ENCODE measurements at regions of chr1 and their contacts with region 1.

Region 1: DNA sequence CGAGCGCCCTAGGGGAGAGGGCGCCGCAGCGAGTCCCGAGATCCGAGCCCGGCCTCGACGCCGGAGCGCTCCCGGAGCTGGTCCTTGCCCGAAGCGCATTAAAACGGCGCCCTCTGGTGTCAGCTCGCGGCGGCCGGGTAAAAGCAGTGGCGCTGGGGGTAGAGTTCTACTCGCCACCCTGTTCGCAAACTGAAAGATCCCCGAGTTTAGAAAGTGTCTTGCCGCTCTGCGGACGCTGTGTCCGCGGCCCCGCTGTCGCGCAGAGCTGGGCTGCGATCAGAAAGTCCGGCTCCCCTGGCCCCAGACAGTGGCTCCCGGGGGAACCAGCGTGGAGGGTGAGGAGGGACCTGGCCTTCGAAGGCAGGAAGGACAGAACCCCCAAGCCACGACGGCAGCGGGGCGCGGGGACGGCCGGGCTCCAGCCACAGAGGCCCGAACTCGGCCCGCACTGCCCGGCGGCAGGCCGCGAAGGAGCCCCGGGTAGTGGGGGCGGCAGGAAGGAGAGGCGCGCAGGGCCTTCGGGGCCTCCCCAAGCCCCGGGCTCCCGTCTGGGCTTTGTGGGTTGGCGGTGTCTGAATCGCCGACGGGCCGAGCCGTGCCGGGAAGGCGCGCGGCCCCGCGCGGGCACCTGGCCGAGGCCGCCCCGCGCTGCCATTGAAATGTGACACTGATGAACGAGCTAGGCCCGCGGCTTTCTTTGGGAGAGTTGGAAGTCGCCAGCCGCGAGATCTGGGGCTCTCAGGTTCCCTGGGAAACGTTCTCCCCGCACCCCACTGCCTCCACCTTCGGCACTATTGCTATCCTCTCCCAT is 39.1 kb upstream of the NFIA start:
- DNase-seq: peak; percentile 59 to 62
- ATAC-seq: peak; percentile 98 to 100
- H3K4me3 ChIP-seq: peak overlapping the region; percentile 34; the same call in 2 of the 3 replicates
- H3K27ac ChIP-seq: peak overlapping the region; percentile 66 to 79; a peak in 5 of 6 replicates
- H3K4me1 ChIP-seq: no peaks in the 10 kb centered on the region
- CTCF ChIP-seq: peak; percentile 64
- EP300 ChIP-seq: no peak
- POLR2A ChIP-seq: no peak
- RAD21 ChIP-seq: peak; percentile 67 to 81

Region 2: DNA sequence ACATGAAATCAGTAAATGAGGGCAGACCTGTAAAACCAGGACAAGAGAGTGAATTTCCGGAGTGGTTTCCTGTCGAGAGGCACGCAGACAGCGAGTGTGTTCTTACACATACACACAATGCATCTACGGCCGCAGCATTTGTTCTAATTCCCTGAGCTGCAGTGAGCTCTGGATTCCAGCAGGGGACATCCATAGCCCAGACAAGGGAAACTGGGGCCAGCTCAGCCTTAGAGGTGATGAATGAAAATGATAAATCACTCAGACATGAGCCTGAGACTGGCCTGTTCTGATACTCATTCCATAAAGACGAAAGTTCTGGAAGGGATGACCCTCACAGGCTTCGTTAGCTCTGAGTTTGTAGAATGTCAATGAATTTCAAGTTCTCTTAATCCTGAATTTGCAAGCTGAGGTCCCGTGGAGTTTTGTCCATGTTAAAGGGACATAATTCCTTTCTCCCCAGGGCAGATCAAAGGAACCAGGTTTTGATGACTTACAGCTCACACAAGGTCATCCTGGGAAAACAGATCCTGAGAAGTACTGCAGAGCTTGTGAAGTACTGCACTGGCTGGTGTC is 761.8 kb before region 1 on chr1:
- CTCF ChIA-PET with region 1: interaction called, 12 read pairs
- POLR2A ChIA-PET with region 1: no interaction called
- DNase-seq: peak; percentile 47 to 57
- ATAC-seq: peak; percentile 99 to 100
- H3K4me3 ChIP-seq: no peak overlapping the region
- H3K27ac ChIP-seq: no peak overlapping the region
- H3K4me1 ChIP-seq: no peaks in the 10 kb centered on the region
- CTCF ChIP-seq: peak; percentile 55
- EP300 ChIP-seq: no peak
- POLR2A ChIP-seq: no peak
- RAD21 ChIP-seq: peak; percentile 69 to 85

Region 3: DNA sequence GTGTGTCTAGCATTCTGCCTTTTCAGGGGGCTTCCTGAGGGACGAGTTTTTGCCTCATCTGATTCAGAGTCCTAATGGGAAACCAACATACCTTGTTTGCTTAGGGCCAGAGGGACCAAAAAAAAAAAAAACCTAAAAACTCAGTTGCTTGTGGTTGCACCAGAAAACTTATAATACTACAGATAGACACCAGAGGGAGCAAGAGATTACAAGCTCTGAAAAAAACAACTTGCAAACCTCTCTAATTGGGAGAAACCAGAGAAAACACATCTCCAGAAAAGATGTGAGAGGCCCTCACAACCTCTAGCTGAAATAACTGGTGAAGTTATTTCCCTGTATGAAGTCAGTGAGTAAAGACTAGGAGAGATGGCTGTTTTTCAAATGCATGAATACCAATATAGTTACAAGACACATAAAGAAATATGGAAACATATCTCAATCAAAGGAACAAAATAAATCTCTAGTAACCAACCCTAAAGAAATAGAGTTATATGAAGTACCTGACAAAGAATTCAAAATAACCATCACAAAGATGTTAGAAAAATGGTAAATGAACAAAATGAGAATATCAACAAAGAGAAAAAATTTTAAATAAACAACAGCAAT is 194.5 kb before region 1 on chr1:
- CTCF ChIA-PET with region 1: interaction called, 30 read pairs
- POLR2A ChIA-PET with region 1: interaction called, 3 read pairs
- DNase-seq: peak in 1 of 2 experiments; percentile 32
- ATAC-seq: peak in 1 of 2 experiments; percentile 44; a peak in 3 of 6 replicates
- H3K4me3 ChIP-seq: no peak overlapping the region
- H3K27ac ChIP-seq: no peak overlapping the region; a peak in 2 of 6 replicates
- H3K4me1 ChIP-seq: no peaks in the 10 kb centered on the region; the same call in 2 of the 3 replicates
- CTCF ChIP-seq: peak; percentile 60
- EP300 ChIP-seq: no peak
- POLR2A ChIP-seq: no peak
- RAD21 ChIP-seq: peak; percentile 59 to 67

Region 4: DNA sequence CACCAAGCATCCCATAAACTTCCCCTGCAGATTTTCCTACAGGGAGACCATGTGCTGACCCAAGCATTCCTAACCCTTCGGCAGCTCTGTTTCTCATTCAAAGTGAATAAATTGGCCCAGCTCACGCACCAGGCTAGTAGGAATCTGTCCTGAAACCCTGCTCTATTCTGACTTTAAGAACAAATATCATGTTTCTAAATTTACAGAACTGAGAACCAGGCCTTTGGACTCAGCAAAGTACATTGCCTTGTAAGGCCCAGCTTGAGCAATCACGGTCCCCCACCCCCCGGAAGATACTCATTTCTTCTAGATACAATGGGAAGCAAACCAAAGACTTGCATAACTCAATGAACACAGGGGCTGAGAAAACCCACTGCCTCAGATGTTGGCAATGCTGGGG is 120.9 kb before region 1 on chr1:
- CTCF ChIA-PET with region 1: no interaction called
- POLR2A ChIA-PET with region 1: no interaction called
- DNase-seq: no peak
- ATAC-seq: no peak
- H3K4me3 ChIP-seq: no peak overlapping the region
- H3K27ac ChIP-seq: no peak overlapping the region
- H3K4me1 ChIP-seq: no peaks in the 10 kb centered on the region
- CTCF ChIP-seq: no peak
- EP300 ChIP-seq: no peak
- POLR2A ChIP-seq: no peak
- RAD21 ChIP-seq: no peak

Region 5: GRCh38 chr1:60978421-60979357 is 64.5 kb before region 1 on chr1:
- CTCF ChIA-PET with region 1: interaction called, 10 read pairs
- POLR2A ChIA-PET with region 1: no interaction called
- DNase-seq: peak; percentile 21 to 43
- ATAC-seq: peak; percentile 95 to 96
- H3K4me3 ChIP-seq: no peak overlapping the region
- H3K27ac ChIP-seq: no peak overlapping the region
- H3K4me1 ChIP-seq: peaks cover 7% of the 10 kb centered on the region; the same call in 1 of the 3 replicates
- CTCF ChIP-seq: peak; percentile 56
- EP300 ChIP-seq: no peak
- POLR2A ChIP-seq: no peak
- RAD21 ChIP-seq: peak; percentile 67 to 77

Region 6: GRCh38 chr1:61056573-61057439 is 13.6 kb after region 1 on chr1:
- CTCF ChIA-PET with region 1: interaction called, 10 read pairs
- POLR2A ChIA-PET with region 1: no interaction called
- DNase-seq: peak in 1 of 2 experiments; percentile 57
- ATAC-seq: peak; percentile 62 to 68; a peak in 5 of 6 replicates
- H3K4me3 ChIP-seq: peak overlapping the region; percentile 92
- H3K27ac ChIP-seq: peak overlapping the region; percentile 90 to 92
- H3K4me1 ChIP-seq: peaks cover 35% of the 10 kb centered on the region
- CTCF ChIP-seq: no peak
- EP300 ChIP-seq: no peak
- POLR2A ChIP-seq: no peak
- RAD21 ChIP-seq: no peak